ENCODE measurements at regions of chr1 and their contacts with region 1.

Region 1: GRCh38 chr1:65687428-65688214 is 105.1 kb upstream of the PDE4B start:
- DNase-seq: peak; percentile 75 to 89 (median 83)
- ATAC-seq: peak; percentile 64 to 90 (median 86)
- H3K4me3 ChIP-seq: no peak overlapping the region
- H3K27ac ChIP-seq: no peak overlapping the region
- H3K4me1 ChIP-seq: peaks cover 0 to 31% (median 19%) of the 10 kb centered on the region in 12 donors
- H3K27me3 ChIP-seq: peaks cover 0 to 5% (median 0%) of the 10 kb centered on the region in 9 donors
- CTCF ChIP-seq: peak; percentile 92 to 99 (median 96)
- POLR2A ChIP-seq: no peak

Region 2: DNA sequence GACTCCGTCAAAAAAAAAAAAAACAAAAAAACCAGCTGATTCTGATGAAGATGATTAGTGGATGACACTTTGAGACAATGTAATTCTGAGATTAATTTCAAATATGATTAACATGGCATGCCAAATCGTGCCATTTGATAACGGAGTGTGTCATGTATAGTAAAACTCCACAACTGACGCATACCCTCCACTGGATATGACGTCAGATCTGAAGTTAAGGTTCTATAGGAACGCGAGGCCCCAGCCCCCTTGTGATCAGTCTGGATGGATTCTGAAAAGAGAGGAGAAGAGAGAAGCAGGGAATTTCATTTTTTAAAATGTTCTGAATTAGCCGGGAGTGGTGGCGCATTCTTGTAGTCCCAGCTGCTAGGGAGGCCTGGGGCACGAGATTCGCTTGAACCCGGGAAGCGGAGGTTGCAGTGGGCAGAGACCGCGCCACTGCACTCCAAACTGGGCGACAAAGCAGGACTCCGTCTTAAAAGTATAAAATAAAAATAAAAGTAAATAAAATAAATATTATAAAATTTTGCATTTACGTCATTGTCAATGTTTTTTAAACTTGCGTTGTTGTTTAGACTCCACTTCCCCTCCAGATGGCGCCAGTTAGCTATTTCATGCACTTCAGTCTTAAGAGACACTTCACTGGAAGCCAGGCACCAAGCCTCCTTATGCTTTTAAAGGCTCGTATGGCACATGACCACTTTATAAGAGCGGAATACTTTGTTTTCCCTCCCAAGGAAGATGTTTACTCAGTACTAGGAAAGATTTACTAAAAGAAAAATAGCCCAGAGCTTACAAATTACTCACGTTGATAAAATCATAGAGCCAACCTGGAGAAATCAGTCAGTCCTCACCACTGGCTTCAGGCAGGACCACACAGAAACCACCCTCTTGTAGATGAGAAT is 1418.7 kb before region 1 on chr1:
- intact Hi-C with region 1: loop called in 1 of 10 experiments (anchors 10 kb)
- DNase-seq: peak in 4 of 5 donors; percentile 64 to 73 (median 70)
- ATAC-seq: peak in 3 of 4 donors; percentile 69 to 79 (median 74)
- H3K4me3 ChIP-seq: no peak overlapping the region
- H3K27ac ChIP-seq: no peak overlapping the region
- H3K4me1 ChIP-seq: peaks cover 0 to 6% (median 0%) of the 10 kb centered on the region in 12 donors
- H3K27me3 ChIP-seq: no peaks in the 10 kb centered on the region
- CTCF ChIP-seq: peak; percentile 69 to 89 (median 81)
- POLR2A ChIP-seq: no peak

Region 3: DNA sequence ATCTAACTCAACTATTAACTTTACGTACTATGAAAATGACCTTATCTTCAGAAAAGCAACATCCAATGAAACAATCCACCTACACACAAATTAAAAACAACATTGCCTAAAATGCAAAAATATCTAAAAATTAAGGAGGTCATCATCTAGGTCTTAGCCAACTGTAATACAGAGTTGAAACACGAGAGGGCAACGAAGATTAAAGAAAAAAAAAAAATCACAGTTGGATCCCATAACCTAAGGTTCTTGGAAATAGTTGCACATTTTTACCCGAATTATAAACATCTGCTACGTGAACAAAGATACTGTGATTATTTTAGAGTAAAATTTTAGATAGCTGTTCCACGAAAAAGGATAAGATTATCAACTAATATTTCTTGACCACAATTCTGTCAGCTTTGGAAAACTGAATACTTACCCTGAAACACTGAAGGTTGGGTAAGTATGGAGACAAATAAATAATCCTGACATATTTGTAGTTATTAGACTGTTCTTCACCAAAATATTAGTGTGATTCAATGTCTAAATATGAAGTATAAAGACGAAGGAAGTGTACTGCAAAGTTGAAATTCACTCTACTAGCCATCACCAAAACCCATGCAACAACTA is 627.6 kb before region 1 on chr1:
- intact Hi-C with region 1: loop called in 4 of 10 experiments (anchors 5 to 10 kb)
- DNase-seq: no peak
- ATAC-seq: peak in 2 of 4 donors; percentile 43 to 49
- H3K4me3 ChIP-seq: no peak overlapping the region
- H3K27ac ChIP-seq: no peak overlapping the region
- H3K4me1 ChIP-seq: peaks cover 0 to 90% (median 58%) of the 10 kb centered on the region in 12 donors
- H3K27me3 ChIP-seq: no peaks in the 10 kb centered on the region
- CTCF ChIP-seq: peak; percentile 49 to 78 (median 70)
- POLR2A ChIP-seq: no peak

Region 4: GRCh38 chr1:65075123-65075976 is 612.3 kb before region 1 on chr1:
- intact Hi-C with region 1: loop called in 2 of 10 experiments (anchors 5 to 10 kb)
- DNase-seq: peak in 3 of 5 donors; percentile 37 to 59 (median 53)
- ATAC-seq: peak; percentile 65 to 89 (median 83)
- H3K4me3 ChIP-seq: no peak overlapping the region
- H3K27ac ChIP-seq: no peak overlapping the region
- H3K4me1 ChIP-seq: no peaks in the 10 kb centered on the region
- H3K27me3 ChIP-seq: no peaks in the 10 kb centered on the region
- CTCF ChIP-seq: peak; percentile 59 to 81 (median 73)
- POLR2A ChIP-seq: no peak

Region 5: GRCh38 chr1:65214340-65215027 is 473.1 kb before region 1 on chr1:
- intact Hi-C with region 1: loop called in 3 of 10 experiments (anchors 1 to 5 kb)
- DNase-seq: no peak
- ATAC-seq: no peak
- H3K4me3 ChIP-seq: no peak overlapping the region
- H3K27ac ChIP-seq: no peak overlapping the region
- H3K4me1 ChIP-seq: peaks cover 0 to 10% (median 2%) of the 10 kb centered on the region in 12 donors
- H3K27me3 ChIP-seq: no peaks in the 10 kb centered on the region
- CTCF ChIP-seq: no peak
- POLR2A ChIP-seq: no peak

Region 6: DNA sequence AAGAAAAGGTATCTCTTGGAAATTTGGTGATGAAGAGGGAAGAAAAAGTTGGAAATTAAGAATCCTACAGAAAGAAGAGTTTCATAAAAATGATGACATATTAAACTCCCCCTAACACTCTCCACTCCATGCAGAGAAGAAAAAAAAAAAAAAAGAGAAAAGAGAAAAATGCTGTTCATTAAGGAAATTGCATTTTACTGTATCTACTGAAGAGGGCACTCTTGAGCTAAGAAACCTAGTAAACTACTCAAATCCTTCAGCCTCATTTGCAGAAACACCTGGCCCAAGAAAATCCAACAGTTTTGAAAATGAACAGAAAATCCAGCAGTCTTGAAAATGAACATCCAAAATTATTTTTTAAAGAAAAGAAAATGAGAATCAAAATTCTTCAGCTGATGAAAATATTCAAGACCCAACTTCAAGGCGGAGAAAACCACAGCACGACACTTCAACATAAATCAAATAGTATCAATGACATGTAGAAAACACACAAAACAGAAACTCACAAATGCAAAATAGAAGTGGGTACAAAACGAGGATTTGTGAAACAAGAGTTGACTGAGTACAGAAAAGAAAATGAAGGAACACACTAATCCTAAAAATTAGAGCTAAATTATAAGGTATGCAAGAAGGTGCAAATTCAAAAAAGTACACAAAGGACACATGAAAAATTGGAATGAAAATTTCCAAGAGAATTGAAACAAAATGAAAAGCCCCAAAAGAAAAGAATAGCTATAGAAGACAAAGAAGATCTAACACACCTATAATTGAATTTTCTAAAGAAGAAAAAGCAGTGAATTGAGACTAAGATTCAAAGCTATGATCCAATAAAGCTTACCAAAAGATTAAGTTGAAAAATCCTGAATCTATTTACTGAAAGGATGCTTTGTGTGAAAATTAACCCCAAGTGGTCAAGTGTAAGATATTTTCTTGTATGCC is 451.5 kb before region 1 on chr1:
- intact Hi-C with region 1: loop called (anchors 1 to 5 kb)
- DNase-seq: no peak
- ATAC-seq: no peak
- H3K4me3 ChIP-seq: no peak overlapping the region
- H3K27ac ChIP-seq: no peak overlapping the region
- H3K4me1 ChIP-seq: peaks cover 0 to 12% (median 0%) of the 10 kb centered on the region in 12 donors
- H3K27me3 ChIP-seq: no peaks in the 10 kb centered on the region
- CTCF ChIP-seq: peak; percentile 42 to 70 (median 57)
- POLR2A ChIP-seq: no peak

Region 7: DNA sequence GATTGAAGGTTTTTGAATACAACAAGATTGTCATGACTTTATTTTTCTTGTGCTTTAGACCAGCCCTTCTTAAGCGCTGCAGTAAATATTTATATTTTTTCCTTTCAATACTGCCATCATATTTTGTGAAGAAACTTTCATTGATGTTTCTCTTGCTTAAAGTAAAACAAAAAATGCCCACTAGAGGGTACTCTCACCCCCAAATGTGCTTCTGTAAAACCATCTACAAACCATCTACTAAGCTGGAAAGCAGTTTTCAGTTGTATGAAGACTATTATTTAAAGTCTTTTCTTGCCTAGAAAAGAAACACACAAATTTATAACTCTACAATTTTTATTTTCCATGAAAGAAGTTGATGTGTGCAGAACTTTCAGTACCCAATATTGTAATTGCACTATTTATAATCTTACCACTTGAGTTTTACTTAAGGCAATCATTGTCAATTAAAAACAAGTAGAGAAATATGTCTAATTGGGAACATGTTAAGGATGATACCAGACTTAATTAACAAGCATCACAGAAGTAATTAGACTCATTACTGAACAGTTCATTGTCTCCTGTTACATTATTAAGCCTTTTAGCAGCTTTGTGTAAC is 256.4 kb before region 1 on chr1:
- intact Hi-C with region 1: loop called in 8 of 10 experiments (anchors 1 to 10 kb)
- DNase-seq: no peak
- ATAC-seq: no peak
- H3K4me3 ChIP-seq: no peak overlapping the region
- H3K27ac ChIP-seq: peak overlapping the region in 5 of 12 donors; percentile 53 to 84 (median 59)
- H3K4me1 ChIP-seq: peaks cover 0 to 31% (median 9%) of the 10 kb centered on the region in 12 donors
- H3K27me3 ChIP-seq: no peaks in the 10 kb centered on the region
- CTCF ChIP-seq: peak; percentile 37 to 77 (median 63)
- POLR2A ChIP-seq: no peak

Region 8: DNA sequence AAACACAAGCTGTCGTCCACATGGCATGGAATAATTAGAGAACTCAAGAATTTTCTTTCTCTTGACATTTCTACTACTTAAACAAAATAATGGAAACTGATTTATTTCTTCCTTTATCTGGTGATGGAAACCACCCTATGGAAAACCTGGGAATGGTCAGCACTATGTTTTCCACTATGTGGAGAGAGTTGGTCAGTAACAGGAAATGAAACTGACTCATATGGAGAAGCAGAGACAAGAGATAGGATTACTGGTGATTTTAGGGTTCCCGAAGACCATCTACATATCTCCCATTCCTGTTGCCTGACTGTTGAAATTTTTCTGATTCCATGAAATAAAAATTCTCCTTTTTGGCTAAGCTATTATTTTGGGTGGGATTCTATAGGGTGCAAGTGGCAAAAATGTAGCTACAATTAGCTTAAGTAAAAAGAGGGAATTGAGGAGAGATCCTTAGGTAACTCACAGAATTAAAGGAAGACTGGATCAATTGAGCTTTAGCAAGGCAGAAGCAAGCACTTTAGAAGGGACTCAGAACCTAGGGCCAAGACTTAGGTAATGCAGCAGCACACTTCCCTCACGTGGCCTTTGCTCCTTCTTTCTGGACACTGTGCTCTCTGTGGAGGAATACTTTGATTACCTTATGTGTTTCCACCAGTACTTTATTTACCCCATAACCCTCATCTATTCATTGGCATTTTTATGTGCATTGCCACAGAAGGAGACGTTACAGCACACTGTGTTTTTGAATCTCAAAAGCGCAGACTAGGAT is 177.5 kb before region 1 on chr1:
- intact Hi-C with region 1: no loop called
- DNase-seq: no peak
- ATAC-seq: no peak
- H3K4me3 ChIP-seq: no peak overlapping the region
- H3K27ac ChIP-seq: no peak overlapping the region
- H3K4me1 ChIP-seq: peaks cover 0 to 19% (median 0%) of the 10 kb centered on the region in 12 donors
- H3K27me3 ChIP-seq: no peaks in the 10 kb centered on the region
- CTCF ChIP-seq: no peak
- POLR2A ChIP-seq: no peak

Region 9: DNA sequence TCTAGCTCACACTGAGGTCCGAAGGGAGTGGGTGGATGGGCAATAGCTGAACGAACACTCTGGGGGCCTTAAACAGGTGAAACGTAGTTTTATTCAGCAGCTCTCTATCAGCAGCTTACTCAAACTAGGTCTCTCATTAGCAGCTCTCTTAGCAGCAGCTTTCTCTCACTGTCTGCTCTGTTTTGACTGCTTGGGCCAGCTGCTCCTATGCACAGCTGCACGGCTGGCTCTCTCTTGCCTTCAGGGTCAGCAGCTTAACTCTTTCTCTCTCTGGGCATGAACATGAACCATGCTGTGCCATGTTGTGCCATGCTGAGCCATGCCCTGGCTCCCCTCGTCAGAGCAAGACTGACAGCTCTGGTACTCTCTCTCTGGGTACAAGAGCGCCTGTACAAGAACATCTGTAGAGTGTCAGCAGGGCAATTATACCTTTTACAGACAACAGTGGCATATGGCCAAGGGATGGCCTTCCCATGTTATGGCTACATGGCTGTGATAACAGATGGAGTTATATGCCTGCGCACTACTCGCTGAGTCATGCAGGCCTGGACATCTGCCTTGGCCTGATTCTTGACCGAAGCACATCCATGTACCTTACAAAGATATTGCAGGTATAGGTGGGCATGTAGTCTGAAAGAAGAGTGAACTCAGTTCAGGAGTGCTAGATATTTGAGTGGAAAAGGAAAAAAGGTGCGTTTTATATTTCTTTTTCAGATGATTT is 114.8 kb before region 1 on chr1:
- intact Hi-C with region 1: no loop called
- DNase-seq: no peak
- ATAC-seq: no peak
- H3K4me3 ChIP-seq: no peak overlapping the region
- H3K27ac ChIP-seq: no peak overlapping the region
- H3K4me1 ChIP-seq: no peaks in the 10 kb centered on the region
- H3K27me3 ChIP-seq: no peaks in the 10 kb centered on the region
- CTCF ChIP-seq: no peak
- POLR2A ChIP-seq: no peak

Measured in heart left ventricle (tissue), 16 donors.